Thyroid gland (tissue), 4 donors: ENCODE measurements at regions of chr1 and their contacts with region 1.

Region 1: GRCh38 chr1:155978325-155978972 is at the start of gene ARHGEF2:
- DNase-seq: peak; percentile 72 to 73
- H3K4me3 ChIP-seq: peak within 1 kb of the TSS; percentile 90 to 98 (median 92)
- H3K27ac ChIP-seq: peak within 1 kb of the TSS; percentile 94 to 96 (median 96)
- H3K4me1 ChIP-seq: peaks cover 71 to 77% of the 10 kb centered on the region in 2 donors
- H3K27me3 ChIP-seq: no peaks in the 10 kb centered on the region
- CTCF ChIP-seq: peak in 1 of 6 experiments; percentile 29
- POLR2A ChIP-seq: peak in 1 of 2 donors; percentile 66
- total RNA-seq, gene ARHGEF2: 47.4 to 80.1 (median 66.6) TPM

Region 2: GRCh38 chr1:155897746-155898145 is 80.7 kb before region 1 on chr1:
- intact Hi-C with region 1: no loop called
- DNase-seq: no peak
- H3K4me3 ChIP-seq: no peak overlapping the region
- H3K27ac ChIP-seq: no peak overlapping the region
- H3K4me1 ChIP-seq: peaks cover 0 to 7% of the 10 kb centered on the region in 2 donors
- H3K27me3 ChIP-seq: no peaks in the 10 kb centered on the region
- CTCF ChIP-seq: no peak
- POLR2A ChIP-seq: no peak

Region 3: DNA sequence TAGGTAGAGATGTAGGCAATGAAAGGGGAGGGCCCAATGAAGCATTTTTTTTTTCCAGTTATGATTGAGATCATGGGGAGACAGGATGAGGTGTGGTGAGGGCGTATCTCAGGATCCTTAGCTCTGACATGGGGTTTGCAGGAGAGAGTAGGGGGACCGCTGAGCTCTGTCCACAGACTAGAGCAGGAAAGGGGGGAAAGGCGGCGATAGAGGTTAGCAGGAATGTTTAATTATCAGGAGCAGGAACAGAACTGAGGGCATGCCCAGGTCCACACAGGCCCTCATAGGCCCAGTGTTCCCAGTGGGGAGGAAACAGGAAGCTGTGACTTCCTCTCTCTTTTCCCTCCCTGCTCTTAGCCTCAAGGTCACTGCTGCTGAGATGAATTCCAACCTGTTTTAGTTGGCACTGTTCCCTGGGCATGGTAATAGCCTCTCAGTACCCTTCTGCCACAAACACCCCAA is 37.9 kb before region 1 on chr1:
- intact Hi-C with region 1: loop called (anchors 5 kb)
- DNase-seq: peak; percentile 60 to 61
- H3K4me3 ChIP-seq: no peak overlapping the region
- H3K27ac ChIP-seq: peak overlapping the region; percentile 76 to 87 (median 86)
- H3K4me1 ChIP-seq: peaks cover 47 to 60% of the 10 kb centered on the region in 2 donors
- H3K27me3 ChIP-seq: no peaks in the 10 kb centered on the region
- CTCF ChIP-seq: no peak
- POLR2A ChIP-seq: no peak

Region 4: GRCh38 chr1:156033011-156033410 is 54.6 kb after region 1 on chr1:
- intact Hi-C with region 1: no loop called
- DNase-seq: no peak
- H3K4me3 ChIP-seq: no peak overlapping the region
- H3K27ac ChIP-seq: no peak overlapping the region
- H3K4me1 ChIP-seq: no peaks in the 10 kb centered on the region
- H3K27me3 ChIP-seq: no peaks in the 10 kb centered on the region
- CTCF ChIP-seq: no peak
- POLR2A ChIP-seq: no peak

Region 5: GRCh38 chr1:156076501-156077429 is 98.3 kb after region 1 on chr1:
- intact Hi-C with region 1: no loop called
- DNase-seq: peak; percentile 47 to 64
- H3K4me3 ChIP-seq: peak overlapping the region in 1 of 3 donors; percentile 32
- H3K27ac ChIP-seq: peak overlapping the region in 2 of 3 donors; percentile 17 to 38
- H3K4me1 ChIP-seq: peaks cover 0 to 18% of the 10 kb centered on the region in 2 donors
- H3K27me3 ChIP-seq: no peaks in the 10 kb centered on the region
- CTCF ChIP-seq: no peak
- POLR2A ChIP-seq: peak in 1 of 2 donors; percentile 35